ENCODE measurements at regions of chr9 and their contacts with region 1.

Region 1: DNA sequence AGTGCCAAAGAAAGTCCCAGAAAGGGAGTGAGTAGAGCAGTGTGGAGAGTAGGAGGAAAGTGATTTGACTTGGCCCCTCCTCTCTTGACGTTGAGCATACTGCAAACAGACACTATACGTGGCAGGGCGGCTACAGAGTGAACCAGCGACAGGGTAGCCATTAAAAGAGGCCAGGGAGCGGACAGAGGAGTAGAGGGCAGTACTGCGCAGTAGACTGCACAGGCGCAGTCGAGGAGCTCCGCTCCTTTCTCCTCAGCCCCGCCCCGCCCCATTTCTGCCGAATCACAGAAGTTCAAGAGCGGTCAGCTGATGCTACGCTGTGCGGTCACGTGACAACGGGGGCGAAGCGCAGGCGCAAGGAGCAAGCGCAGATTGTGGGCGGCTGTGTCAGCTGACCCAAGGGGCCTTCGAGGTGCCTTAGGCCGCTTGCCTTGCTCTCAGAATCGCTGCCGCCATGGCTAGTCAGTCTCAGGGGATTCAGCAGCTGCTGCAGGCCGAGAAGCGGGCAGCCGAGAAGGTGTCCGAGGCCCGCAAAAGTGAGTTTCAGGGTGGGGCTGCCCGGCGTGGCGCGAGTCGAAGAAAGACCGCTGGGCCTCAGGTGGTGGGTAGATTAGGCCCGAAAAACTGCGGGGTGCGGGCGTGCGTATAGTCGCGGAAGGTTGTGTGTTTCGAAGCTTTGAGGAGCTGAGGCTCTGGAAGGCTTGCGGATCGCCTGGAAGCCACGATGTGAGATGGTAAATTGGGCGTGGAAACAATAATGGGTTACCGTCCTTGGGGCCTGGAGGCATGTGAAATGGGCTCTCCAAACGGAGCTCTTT is at the start of gene ATP6V1G1:
- DNase-seq: peak; percentile 99
- total RNA-seq, gene ATP6V1G1: 64.6 TPM

Region 2: GRCh38 chr9:114174876-114175771 is 412.5 kb before region 1 on chr9:
- intact Hi-C with region 1: no loop called
- DNase-seq: no peak

Region 3: GRCh38 chr9:114405294-114406034 is 182.1 kb before region 1 on chr9:
- intact Hi-C with region 1: loop called (anchors 10 kb)
- DNase-seq: peak; percentile 86

Region 4: DNA sequence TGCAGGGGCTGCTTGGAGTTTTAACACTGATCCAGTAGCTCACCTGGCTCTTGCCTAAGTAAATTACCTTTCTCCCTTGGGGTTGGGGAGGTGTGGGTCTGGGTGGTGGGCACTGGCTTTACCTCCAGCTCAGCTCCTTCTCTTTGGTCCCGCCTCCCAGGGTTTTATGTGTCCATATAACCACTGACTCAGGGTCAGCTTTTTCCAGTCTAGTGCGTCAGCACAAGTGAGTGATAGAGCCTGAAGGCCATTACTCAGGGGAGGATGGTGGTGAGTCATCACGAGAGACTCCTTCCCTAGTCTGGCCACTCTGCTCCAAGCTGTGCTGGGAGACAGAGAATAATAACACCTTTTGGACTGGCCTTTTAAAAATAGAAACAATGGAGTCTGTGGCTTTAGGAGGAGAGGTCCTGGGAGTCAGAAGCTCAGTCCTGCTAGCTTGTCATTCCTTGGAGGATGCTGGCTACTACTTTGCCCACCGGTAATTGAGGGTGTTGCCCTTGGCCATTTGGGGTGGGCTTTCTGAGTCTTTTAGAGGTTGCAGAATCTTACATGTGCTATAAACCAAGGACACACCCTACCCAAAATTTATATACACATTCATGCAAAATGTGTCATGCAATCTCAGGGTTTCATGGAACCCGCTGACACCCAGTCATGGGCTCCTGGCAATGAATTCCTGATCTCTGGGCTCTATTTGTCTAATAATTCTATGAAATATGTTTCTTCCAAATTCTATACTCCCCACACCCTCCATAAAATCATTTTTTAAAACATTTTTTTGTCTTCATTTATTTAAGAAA is 35.5 kb before region 1 on chr9:
- intact Hi-C with region 1: no loop called
- DNase-seq: no peak

Region 5: DNA sequence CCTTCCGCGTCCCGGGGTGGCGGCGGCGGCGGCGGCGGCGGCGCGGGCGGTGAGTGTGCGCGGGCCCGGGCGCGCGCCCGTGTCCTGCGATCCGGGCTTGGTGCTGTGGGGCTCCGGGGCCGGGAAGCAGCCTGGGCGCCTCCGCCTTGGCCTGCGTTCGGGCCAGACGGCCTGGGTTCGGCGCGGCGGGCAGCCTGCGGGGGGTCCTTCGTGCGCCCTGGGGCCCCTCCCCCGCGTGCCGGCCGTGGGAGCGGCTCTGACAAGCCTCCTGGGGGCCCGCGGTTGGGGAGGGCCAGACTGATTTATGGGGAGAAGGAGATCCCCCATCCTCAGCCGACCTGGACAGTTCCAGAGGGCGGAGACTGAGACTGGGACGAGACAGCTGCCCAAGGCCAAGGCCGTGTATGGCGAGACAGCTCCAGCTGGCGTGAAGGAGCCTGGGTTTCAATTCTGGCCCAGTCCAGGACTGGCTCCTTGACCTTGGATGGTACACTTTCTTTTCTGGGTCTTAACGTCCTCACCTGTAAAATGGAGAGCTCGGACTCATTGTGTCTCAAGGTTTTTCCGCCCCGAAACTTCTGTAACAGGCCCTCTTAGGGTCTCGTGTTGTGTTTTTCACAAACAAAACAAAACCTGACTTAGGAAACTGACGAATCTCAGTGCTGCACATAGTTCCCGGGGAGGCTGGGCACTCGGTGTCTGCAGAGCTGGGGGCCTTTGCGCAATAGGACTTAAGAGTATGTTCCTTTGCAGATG is 24.1 kb after region 1 on chr9:
- intact Hi-C with region 1: loop called (anchors 1 kb)
- DNase-seq: peak; percentile 80

Region 6: DNA sequence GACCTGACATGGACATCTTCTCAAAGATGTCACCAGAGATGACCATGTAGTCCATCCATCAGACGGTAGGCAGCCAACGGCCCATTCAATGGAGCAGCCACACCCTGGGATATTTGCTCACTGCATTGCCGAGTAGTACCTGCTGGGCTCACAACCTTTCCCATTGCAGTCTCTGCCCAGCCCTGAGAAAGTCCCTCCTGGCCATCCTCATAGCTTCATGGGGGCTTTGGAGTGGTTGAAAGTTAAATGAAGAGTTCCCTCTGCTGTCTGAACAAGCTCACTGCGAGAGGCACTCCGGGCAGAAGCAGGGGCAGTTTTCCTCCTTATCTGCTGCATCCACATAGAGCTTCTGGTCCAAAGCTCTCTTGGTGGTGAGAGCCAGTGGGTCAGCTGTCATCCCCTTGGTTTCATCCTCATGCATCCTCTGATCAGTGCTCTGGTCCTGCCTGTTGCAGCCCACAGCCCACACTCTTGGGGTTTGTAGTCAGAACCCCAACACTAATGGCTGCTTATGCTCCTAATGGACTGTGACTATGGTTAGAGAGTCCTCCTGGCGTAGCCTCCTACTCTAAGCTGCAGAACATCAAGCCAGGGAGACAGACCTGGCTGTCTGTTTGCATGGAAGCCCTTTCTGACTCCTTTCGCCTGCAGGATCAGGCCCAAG is 319.4 kb after region 1 on chr9:
- intact Hi-C with region 1: no loop called
- DNase-seq: no peak